HCT116 (cell line): ENCODE measurements at regions of chr6 and their contacts with region 1.

Region 1: GRCh38 chr6:35297601-35298481 is at the start of gene DEF6:
- DNase-seq: peak; percentile 81
- ATAC-seq: peak; percentile 93
- H3K4me3 ChIP-seq: peak within 1 kb of the TSS; percentile 84 to 94
- H3K27ac ChIP-seq: peak within 1 kb of the TSS; percentile 70
- H3K4me1 ChIP-seq: peaks cover 14 to 39% of the 10 kb centered on the region in 2 experiments
- H3K27me3 ChIP-seq: no peaks in the 10 kb centered on the region
- CTCF ChIP-seq: peak; percentile 89 to 96 (median 89)
- POLR2A ChIP-seq: peak; percentile 53
- RAD21 ChIP-seq: peak; percentile 100
- total RNA-seq, gene DEF6: 40.4 TPM

Region 2: DNA sequence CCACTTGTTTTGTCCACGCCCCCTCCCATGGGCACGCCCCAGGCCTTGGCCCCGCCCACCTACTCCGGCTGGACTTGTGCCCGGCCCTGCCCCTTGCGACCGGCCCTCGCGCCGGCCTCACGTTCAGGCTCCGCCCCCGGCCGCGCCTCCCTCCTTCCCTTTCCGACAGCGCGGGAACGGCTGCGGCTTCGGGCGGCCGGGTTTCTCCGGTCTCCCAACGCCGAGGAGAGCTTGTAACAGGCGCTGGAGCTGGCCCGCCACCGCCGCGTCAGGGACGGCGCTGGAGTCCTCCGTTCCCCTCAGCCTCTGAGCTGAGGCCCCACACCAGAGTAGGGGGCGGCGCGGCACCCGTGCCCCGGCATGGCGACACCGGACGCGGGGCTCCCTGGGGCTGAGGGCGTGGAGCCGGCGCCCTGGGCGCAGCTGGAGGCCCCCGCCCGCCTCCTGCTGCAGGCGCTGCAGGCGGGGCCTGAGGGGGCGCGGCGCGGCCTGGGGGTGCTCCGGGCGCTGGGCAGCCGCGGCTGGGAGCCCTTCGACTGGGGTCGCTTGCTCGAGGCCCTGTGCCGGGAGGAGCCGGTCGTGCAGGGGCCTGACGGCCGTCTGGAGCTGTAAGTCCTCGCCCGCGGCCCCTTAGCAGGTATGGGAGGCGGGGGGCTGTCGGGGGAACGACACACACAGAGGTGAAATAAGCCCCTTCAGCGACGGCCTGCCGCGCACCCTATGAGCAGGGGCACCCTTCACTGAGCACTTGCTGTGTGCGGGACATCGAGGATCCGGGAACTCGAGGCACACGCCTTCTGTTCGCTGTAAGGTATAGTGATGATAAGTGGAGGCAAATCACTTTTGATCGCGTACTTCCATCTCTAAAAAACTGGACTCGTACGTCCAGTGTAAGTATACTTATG is 154.6 kb after region 1 on chr6 and contains the start of gene FANCE:
- CTCF ChIA-PET with region 1: interaction called, 46 read pairs
- POLR2A ChIA-PET with region 1: no interaction called
- RAD21 ChIA-PET with region 1: interaction called, 5 read pairs
- intact Hi-C with region 1: loop called (anchors 1 kb)
- DNase-seq: peak; percentile 81
- ATAC-seq: peak; percentile 87
- H3K4me3 ChIP-seq: peak within 1 kb of the TSS; percentile 62 to 72
- H3K27ac ChIP-seq: peak within 1 kb of the TSS; percentile 46; the same call in 1 of the 2 replicates
- H3K4me1 ChIP-seq: peaks cover 13 to 28% of the 10 kb centered on the region in 2 experiments; a peak in 3 of 4 replicates
- H3K27me3 ChIP-seq: no peaks in the 10 kb centered on the region
- CTCF ChIP-seq: no peak
- POLR2A ChIP-seq: no peak
- RAD21 ChIP-seq: no peak
- total RNA-seq, gene FANCE: 16.1 TPM